MCF 10A (cell line): ENCODE measurements at regions of chrX and their contacts with region 1.

Region 1: GRCh38 chrX:116204932-116205331 is 34.4 kb downstream of the AGTR2 start:
- DNase-seq: peak; percentile 52
- H3K4me3 Mint-ChIP-seq: no peak overlapping the region
- H3K27ac Mint-ChIP-seq: peak overlapping the region; percentile 63
- H3K4me1 Mint-ChIP-seq: no peaks in the 10 kb centered on the region
- H3K27me3 Mint-ChIP-seq: peaks cover 68% of the 10 kb centered on the region
- CTCF ChIP-seq: peak; percentile 79

Region 2: GRCh38 chrX:116449169-116449568 is 244.2 kb after region 1 on chrX:
- CTCF ChIA-PET with region 1: no interaction called
- POLR2A ChIA-PET with region 1: no interaction called
- intact Hi-C with region 1: loop called (anchors 1 kb)
- DNase-seq: peak; percentile 12
- H3K4me3 Mint-ChIP-seq: no peak overlapping the region
- H3K27ac Mint-ChIP-seq: no peak overlapping the region
- H3K4me1 Mint-ChIP-seq: no peaks in the 10 kb centered on the region
- H3K27me3 Mint-ChIP-seq: peaks cover 27% of the 10 kb centered on the region
- CTCF ChIP-seq: no peak

Region 3: GRCh38 chrX:116961872-116962582 is 757.1 kb after region 1 on chrX:
- CTCF ChIA-PET with region 1: interaction called, 3 read pairs
- POLR2A ChIA-PET with region 1: no interaction called
- intact Hi-C with region 1: loop called (anchors 5 kb)
- DNase-seq: peak; percentile 16
- H3K4me3 Mint-ChIP-seq: no peak overlapping the region
- H3K27ac Mint-ChIP-seq: no peak overlapping the region
- H3K4me1 Mint-ChIP-seq: no peaks in the 10 kb centered on the region
- H3K27me3 Mint-ChIP-seq: no peaks in the 10 kb centered on the region
- CTCF ChIP-seq: peak; percentile 19

Region 4: GRCh38 chrX:117510453-117510852 is 1305.5 kb after region 1 on chrX:
- CTCF ChIA-PET with region 1: no interaction called
- POLR2A ChIA-PET with region 1: no interaction called
- intact Hi-C with region 1: loop called (anchors 2 kb)
- DNase-seq: peak; percentile 48
- H3K4me3 Mint-ChIP-seq: no peak overlapping the region
- H3K27ac Mint-ChIP-seq: no peak overlapping the region
- H3K4me1 Mint-ChIP-seq: no peaks in the 10 kb centered on the region
- H3K27me3 Mint-ChIP-seq: no peaks in the 10 kb centered on the region
- CTCF ChIP-seq: peak; percentile 28

Region 5: GRCh38 chrX:117985241-117985640 is 1780.3 kb after region 1 on chrX:
- CTCF ChIA-PET with region 1: interaction called, 3 read pairs
- POLR2A ChIA-PET with region 1: no interaction called
- intact Hi-C with region 1: loop called (anchors 2 kb)
- DNase-seq: no peak
- H3K4me3 Mint-ChIP-seq: no peak overlapping the region
- H3K27ac Mint-ChIP-seq: no peak overlapping the region
- H3K4me1 Mint-ChIP-seq: peaks cover 9% of the 10 kb centered on the region
- H3K27me3 Mint-ChIP-seq: peaks cover 7% of the 10 kb centered on the region
- CTCF ChIP-seq: no peak